ENCODE measurements at regions of chr17 and their contacts with region 1.

Region 1: DNA sequence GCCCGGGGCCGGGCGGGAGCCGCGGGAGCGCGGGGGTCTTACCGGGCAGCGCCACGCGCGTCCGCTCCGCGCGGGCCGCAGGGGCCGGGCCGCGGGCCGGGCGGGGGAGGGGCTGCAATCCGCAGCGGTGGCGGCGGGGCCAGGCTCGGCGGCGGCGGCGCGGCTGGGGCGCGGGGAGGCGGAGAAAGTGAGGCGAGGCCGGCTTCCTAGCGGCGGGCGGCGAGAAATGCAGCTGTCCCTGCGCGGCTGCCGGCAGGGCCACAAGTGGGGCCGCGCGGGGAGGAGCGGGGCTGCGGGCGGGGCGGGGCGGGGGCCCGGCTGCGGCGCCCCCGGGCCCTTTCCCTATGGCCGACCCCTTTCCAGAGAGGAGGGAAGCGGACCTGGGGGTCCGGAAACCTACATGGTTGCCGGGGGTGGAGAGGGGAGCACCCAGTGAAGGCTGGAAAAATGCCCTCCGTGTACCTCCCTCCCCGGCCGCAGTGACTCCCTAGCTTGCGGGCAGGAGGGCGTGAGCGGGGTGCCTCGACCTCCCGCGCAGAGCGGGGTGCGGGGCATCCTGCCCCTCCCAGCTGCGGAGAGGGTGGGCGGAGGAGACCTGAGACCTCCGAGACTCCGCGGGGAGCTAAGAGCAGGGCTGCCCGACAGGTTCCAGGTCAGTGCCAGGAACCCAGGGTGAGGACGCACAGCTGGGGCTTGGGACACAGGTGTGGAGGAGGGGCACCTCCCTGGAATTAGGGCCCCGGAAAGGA is at the start of gene CUEDC1:
- DNase-seq: peak; percentile 77 to 93 (median 85)
- ATAC-seq: peak; percentile 80 to 92 (median 84)
- H3K4me3 ChIP-seq: peak within 1 kb of the TSS; percentile 67 to 86 (median 78)
- H3K27ac ChIP-seq: peak within 1 kb of the TSS; percentile 82 to 95 (median 93)
- H3K4me1 ChIP-seq: peaks cover 0 to 9% (median 0%) of the 10 kb centered on the region in 3 donors
- H3K27me3 ChIP-seq: no peaks in the 10 kb centered on the region
- CTCF ChIP-seq: no peak
- total RNA-seq, gene CUEDC1: 16.5 to 22.5 (median 21.2) TPM

Region 2: DNA sequence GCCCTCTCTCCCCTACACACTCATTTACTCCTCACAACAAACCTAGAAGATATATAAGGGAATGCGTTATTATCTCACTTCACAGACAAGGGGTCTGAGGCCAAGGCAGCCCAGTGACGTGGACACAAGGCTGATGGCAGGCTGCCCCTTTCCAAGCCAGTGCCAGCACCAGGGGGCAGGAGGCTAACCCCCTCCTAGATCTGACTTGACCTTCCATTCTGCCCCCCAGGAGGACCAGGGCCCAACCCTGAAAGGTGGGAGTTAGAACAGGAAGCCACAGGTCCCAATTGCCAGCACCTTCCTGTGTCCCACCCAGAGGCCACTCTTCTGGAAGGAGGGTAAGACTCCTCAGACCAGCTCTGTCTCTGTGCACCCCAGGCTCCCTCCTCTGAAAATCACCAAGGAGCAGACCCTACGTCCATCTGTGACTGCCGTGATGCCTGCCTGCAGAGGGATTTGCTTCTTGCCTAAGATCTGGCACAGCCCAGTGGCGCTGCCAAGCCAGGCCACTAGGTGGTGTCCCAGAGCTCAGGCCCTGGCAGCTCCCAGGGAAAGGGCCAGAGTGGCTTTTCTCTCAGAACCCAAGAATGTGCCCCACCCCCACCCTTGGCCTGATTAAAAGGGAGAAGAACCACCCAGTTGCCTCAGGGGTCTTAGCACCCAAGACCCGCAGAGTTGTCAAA is 63.1 kb before region 1 on chr17:
- intact Hi-C with region 1: loop called in 1 of 3 experiments (anchors 10 kb)
- DNase-seq: peak; percentile 82 to 96 (median 93)
- ATAC-seq: peak; percentile 42 to 72 (median 64)
- H3K4me3 ChIP-seq: no peak overlapping the region
- H3K27ac ChIP-seq: peak overlapping the region; percentile 85 to 96 (median 95)
- H3K4me1 ChIP-seq: peaks cover 62 to 68% (median 66%) of the 10 kb centered on the region in 3 donors
- H3K27me3 ChIP-seq: no peaks in the 10 kb centered on the region
- CTCF ChIP-seq: peak; percentile 89 to 98 (median 95)

Region 3: DNA sequence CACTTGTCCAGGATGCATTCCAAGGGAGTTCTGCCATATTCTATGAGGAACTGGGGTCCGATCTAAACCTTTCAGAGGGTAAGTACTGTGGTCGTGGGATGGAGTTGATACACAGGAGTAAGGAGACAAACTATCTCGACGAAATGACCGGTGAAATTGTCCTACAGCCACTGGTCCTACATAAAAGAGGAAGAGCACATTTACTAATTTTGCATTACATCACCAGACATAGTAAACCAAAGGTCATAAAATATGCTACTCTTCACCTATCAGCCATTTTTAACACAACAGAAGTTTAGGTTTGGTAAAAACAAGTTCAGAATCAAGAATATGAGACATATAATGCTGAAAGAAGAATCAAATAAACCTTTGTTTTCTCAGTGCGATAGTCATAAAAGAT is 524.7 kb after region 1 on chr17:
- intact Hi-C with region 1: no loop called
- DNase-seq: no peak
- ATAC-seq: no peak
- H3K4me3 ChIP-seq: no peak overlapping the region
- H3K27ac ChIP-seq: no peak overlapping the region
- H3K4me1 ChIP-seq: no peaks in the 10 kb centered on the region
- H3K27me3 ChIP-seq: no peaks in the 10 kb centered on the region
- CTCF ChIP-seq: no peak